BJ (cell line): ENCODE measurements at regions of chr22 and their contacts with region 1.

Region 1: DNA sequence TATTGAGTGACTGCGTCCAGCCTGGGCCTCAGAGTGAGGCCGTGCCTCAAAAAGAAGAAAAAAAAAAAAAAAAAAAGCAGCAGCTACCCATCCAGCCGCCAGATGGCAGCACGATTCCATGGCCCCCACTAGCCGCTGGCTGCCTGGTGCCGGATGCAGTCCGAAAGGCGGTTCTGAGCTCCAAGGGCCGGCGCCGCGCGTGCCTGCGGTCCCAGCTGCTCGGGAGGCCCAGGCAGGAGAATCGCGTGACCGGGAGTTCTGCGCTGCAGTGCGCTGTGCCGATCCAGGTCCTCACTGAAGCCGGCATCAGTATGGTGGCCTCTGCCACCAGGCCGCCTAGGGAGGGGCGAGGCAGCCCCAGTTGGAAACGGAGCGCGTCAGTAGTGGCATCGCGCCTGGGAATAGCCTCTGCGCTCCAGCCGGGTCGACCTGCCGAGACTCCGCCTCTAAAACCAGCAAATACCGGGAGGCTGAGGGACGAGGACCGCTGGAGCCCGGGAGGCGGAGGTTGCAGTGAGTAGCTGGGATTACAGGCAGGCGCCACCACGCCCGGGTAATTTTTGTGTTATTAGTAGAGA is 19.3 kb downstream of the SCARF2 start:
- DNase-seq: no peak
- H3K4me3 ChIP-seq: peak overlapping the region; percentile 43
- H3K27me3 ChIP-seq: 0 out of 2 replicates have a peak, but pooled peaks cover 2% of the 10 kb centered on the region
- CTCF ChIP-seq: peak; percentile 87

Region 2: DNA sequence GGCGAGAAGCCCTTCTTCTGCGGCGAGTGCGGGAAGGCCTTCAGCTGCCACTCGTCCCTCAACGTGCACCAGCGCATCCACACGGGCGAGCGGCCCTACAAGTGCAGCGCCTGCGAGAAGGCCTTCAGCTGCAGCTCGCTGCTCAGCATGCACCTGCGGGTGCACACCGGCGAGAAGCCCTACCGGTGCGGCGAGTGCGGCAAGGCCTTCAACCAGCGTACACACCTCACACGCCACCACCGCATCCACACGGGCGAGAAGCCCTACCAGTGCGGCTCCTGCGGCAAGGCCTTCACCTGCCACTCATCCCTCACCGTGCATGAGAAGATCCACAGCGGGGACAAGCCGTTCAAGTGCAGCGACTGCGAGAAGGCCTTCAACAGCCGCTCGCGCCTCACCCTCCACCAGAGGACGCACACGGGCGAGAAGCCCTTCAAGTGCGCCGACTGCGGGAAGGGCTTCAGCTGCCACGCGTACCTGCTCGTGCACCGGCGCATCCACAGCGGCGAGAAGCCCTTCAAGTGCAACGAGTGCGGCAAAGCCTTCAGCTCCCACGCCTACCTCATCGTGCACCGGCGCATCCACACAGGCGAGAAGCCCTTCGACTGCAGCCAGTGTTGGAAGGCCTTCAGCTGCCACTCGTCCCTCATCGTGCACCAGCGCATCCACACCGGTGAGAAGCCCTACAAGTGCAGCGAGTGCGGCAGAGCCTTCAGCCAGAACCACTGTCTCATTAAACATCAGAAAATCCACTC is 12.2 kb before region 1 on chr22:
- CTCF ChIA-PET with region 1: interaction called, 12 read pairs
- POLR2A ChIA-PET with region 1: no interaction called
- DNase-seq: no peak
- H3K4me3 ChIP-seq: no peak overlapping the region
- H3K27me3 ChIP-seq: no peaks in the 10 kb centered on the region
- CTCF ChIP-seq: no peak

Region 3: DNA sequence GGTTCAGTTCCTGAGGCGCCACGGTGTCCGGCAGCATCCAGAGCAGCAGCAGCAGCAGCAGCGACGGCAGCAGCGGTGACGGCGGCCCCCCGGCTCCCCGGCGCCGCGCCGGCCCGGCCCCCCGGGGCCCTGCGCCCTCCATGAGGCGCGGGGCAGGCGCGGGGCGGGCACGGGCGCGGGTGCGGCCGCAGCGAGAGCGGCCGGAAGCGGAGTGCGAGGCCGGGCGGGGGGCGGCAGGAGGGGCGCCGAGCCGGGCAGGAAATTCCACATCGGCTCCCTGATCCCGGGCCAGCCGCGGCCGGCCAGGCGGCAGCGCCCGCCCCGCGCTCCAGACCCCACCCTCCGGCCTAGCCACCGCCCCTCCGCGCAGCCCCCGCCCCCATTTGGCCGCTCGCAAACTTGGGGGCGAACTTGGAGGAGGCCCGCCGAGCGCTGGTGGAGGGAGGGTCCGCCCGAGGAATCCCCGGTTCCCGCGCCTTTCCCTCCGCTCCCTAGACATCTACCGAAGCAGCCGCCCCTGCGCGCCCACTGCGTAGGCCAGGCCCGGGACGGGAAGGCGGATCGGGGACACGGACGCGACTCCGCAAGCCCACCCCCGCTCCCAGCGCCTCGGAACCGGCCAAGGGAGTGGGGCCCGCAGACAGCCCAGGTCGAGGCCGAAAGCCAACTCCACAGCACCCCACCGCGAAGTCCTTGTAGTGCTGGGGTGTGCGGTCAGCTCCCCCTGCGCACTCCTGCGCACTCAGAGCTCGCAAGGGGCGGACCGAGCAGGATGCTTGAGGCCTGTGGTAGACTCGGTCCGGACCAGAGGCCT is 19.5 kb after region 1 on chr22 and contains the start of gene SCARF2:
- CTCF ChIA-PET with region 1: interaction called, 25 read pairs
- POLR2A ChIA-PET with region 1: no interaction called
- DNase-seq: no peak
- H3K4me3 ChIP-seq: peak within 1 kb of the TSS; percentile 72
- H3K27me3 ChIP-seq: no peaks in the 10 kb centered on the region
- CTCF ChIP-seq: no peak
- polyA plus RNA-seq, gene SCARF2: 15.3 and 28.8 TPM in 2 replicates

Region 4: GRCh38 chr22:20449819-20450550 is 31.7 kb after region 1 on chr22:
- CTCF ChIA-PET with region 1: interaction called, 88 read pairs
- POLR2A ChIA-PET with region 1: interaction called, 4 read pairs
- DNase-seq: no peak
- H3K4me3 ChIP-seq: no peak overlapping the region
- H3K27me3 ChIP-seq: no peaks in the 10 kb centered on the region
- CTCF ChIP-seq: no peak